ENCODE measurements at regions of chr19 and their contacts with region 1.

Region 1: DNA sequence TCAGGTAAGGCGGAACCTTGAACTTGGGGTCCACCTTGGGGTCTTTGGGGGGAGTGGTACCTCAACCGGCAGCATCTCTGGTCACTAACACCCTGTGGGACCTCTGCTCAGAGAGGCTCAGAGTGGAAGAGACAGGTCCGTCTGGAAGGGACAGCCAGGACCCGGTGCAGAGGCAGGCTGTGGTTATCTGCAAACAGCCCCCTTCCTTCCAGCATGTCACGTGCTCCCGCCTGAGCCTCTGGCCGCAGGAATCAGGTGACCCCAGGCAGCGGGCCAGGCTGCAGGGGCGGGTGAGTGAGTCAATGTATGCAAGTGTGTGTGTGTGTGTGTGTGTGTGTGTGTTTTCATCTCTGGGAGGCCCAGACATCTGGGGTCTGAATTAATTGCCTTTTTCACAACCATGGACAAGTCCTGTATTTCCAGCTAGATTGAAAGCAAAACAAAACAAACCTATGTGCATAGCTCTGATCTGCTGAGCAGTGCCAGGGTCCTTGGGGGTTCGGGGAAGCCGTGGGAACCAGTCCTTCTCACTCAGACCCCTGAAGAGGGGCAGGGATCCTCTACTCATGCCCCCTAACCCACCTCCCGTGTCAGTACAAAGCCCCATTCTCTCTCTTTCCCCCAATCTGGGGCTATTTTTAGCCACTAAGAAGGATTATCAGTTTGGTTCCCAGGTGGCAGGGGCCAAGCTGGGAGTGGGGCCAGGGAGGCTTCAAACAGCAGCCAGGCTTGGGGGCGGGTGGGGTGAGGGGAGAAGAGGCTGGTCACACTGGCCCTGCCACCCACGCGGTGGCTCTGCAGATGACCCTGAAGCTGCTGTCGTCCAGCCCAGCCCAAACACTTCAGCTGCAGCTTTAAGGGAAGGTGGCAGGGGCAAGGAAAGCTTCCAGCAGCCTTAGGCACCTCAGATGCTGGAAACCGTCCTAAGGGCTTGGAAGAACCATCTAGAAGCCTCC is 31.4 kb downstream of the CERS4 start:
- DNase-seq: peak; percentile 87
- H3K4me3 Mint-ChIP-seq: peak overlapping the region; percentile 39
- H3K27ac Mint-ChIP-seq: peak overlapping the region; percentile 65
- H3K4me1 Mint-ChIP-seq: peaks cover 19% of the 10 kb centered on the region
- H3K27me3 Mint-ChIP-seq: no peaks in the 10 kb centered on the region
- CTCF ChIP-seq: no peak

Region 2: GRCh38 chr19:8158411-8159074 is 82.0 kb before region 1 on chr19:
- CTCF ChIA-PET with region 1: interaction called, 5 read pairs
- POLR2A ChIA-PET with region 1: interaction called, 3 read pairs
- intact Hi-C with region 1: loop called (anchors 5 kb)
- DNase-seq: peak; percentile 88
- H3K4me3 Mint-ChIP-seq: no peak overlapping the region
- H3K27ac Mint-ChIP-seq: no peak overlapping the region
- H3K4me1 Mint-ChIP-seq: peaks cover 13% of the 10 kb centered on the region
- H3K27me3 Mint-ChIP-seq: peaks cover 18% of the 10 kb centered on the region
- CTCF ChIP-seq: peak; percentile 55

Region 3: GRCh38 chr19:8224394-8225145 is 16.0 kb before region 1 on chr19:
- CTCF ChIA-PET with region 1: interaction called, 4 read pairs
- POLR2A ChIA-PET with region 1: interaction called, 11 read pairs
- intact Hi-C with region 1: no loop called
- DNase-seq: peak; percentile 80
- H3K4me3 Mint-ChIP-seq: peak overlapping the region; percentile 67
- H3K27ac Mint-ChIP-seq: peak overlapping the region; percentile 5
- H3K4me1 Mint-ChIP-seq: peaks cover 11% of the 10 kb centered on the region
- H3K27me3 Mint-ChIP-seq: no peaks in the 10 kb centered on the region
- CTCF ChIP-seq: no peak

Measured in MCF 10A (cell line).